ENCODE measurements at regions of chr12 and their contacts with region 1.

Region 1: GRCh38 chr12:101773650-101774162 is 34.4 kb upstream of the SYCP3 start:
- DNase-seq: peak; percentile 52 to 85 (median 60)
- ATAC-seq: peak; percentile 97
- H3K4me3 ChIP-seq: no peak overlapping the region
- H3K4me3 Mint-ChIP-seq: no peak overlapping the region
- H3K27ac ChIP-seq: no peak overlapping the region
- H3K27ac Mint-ChIP-seq: no peak overlapping the region
- H3K4me1 ChIP-seq: no peaks in the 10 kb centered on the region
- H3K4me1 Mint-ChIP-seq: peaks cover 5% of the 10 kb centered on the region
- H3K27me3 ChIP-seq: no peaks in the 10 kb centered on the region
- H3K27me3 Mint-ChIP-seq: no peaks in the 10 kb centered on the region
- CTCF ChIP-seq: peak; percentile 92

Region 2: DNA sequence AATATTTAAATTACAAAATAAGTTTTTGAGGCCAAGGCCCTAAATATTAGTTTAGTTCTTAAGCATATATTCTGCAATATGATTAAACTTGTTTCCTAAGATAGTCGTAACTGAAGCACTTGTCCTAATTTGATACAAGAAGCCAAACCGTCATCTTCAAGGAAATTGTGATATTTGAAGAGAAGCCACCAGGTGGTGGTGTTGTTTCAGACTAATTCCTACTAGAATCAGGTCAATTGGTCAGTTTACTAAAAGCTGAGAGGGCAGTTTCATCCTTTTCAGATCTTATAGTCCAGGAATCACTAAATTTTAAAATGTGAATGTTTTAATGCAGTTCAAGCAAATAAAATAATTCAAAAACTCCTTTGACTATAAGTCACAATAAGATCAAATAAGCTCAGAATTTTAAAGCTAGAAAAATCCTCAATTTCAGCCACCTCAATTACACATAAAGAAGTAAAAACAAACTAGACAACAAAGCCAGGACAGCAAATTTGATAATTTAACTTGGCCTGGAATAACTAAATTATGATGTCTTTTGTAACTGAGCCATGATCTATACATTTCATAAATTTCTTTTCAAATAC is 359.1 kb before region 1 on chr12:
- CTCF ChIA-PET with region 1: no interaction called
- POLR2A ChIA-PET with region 1: no interaction called
- intact Hi-C with region 1: loop called in 1 of 2 experiments (anchors 5 kb)
- DNase-seq: peak in 4 of 14 experiments; percentile 17 to 52 (median 42)
- ATAC-seq: no peak
- H3K4me3 ChIP-seq: no peak overlapping the region
- H3K4me3 Mint-ChIP-seq: no peak overlapping the region
- H3K27ac ChIP-seq: no peak overlapping the region
- H3K27ac Mint-ChIP-seq: no peak overlapping the region
- H3K4me1 ChIP-seq: no peaks in the 10 kb centered on the region
- H3K4me1 Mint-ChIP-seq: no peaks in the 10 kb centered on the region
- H3K27me3 ChIP-seq: no peaks in the 10 kb centered on the region
- H3K27me3 Mint-ChIP-seq: no peaks in the 10 kb centered on the region
- CTCF ChIP-seq: peak; percentile 69

Region 3: DNA sequence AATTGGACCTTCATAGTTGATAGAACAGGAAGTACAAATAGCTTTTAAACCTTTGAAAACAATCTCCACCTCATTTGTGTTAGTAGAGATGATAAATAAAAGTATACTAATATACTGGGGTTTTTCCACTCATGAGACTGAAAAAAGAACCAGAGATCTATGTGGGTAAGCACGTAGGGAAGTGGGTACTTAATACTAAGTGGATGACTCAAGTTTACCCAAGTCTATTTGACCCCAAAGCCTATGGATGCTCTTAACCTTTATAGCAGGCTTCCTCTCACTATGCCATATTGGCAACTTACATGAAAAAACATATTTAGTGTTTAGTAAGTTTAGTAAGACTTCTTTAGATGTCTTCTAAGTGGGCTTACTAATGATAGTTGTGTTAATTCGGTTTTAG is 125.5 kb before region 1 on chr12:
- CTCF ChIA-PET with region 1: no interaction called
- POLR2A ChIA-PET with region 1: no interaction called
- intact Hi-C with region 1: no loop called
- DNase-seq: no peak
- ATAC-seq: no peak
- H3K4me3 ChIP-seq: no peak overlapping the region
- H3K4me3 Mint-ChIP-seq: no peak overlapping the region
- H3K27ac ChIP-seq: no peak overlapping the region
- H3K27ac Mint-ChIP-seq: no peak overlapping the region
- H3K4me1 ChIP-seq: no peaks in the 10 kb centered on the region
- H3K4me1 Mint-ChIP-seq: no peaks in the 10 kb centered on the region
- H3K27me3 ChIP-seq: peaks cover 0 to 2% of the 10 kb centered on the region in 2 experiments
- H3K27me3 Mint-ChIP-seq: peaks cover 48% of the 10 kb centered on the region
- CTCF ChIP-seq: no peak

Region 4: DNA sequence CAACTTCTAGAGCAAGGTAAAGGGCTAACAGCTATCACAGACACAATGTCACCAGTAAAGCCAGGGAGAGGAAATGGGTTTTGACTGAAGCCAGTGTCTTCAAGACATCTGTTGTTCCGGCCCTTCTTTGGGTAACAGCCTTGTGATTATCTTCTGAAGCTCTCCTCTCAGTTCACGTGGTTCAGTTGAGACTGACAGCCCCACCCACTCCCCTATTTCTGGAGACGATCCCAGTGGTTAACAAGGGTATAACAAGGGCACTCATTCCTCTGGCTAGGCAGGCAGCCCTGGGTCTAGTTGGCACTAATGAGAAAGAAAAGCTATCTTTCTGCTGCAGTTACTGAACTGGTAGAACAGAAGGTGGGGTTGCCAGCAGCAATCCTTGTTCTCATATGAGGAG is 50.2 kb after region 1 on chr12:
- CTCF ChIA-PET with region 1: interaction called, 38 read pairs
- POLR2A ChIA-PET with region 1: interaction called, 8 read pairs
- intact Hi-C with region 1: no loop called
- DNase-seq: peak; percentile 40 to 90 (median 56)
- ATAC-seq: peak; percentile 99
- H3K4me3 ChIP-seq: no peak overlapping the region
- H3K4me3 Mint-ChIP-seq: peak overlapping the region; percentile 44
- H3K27ac ChIP-seq: no peak overlapping the region
- H3K27ac Mint-ChIP-seq: peak overlapping the region; percentile 83
- H3K4me1 ChIP-seq: peaks cover 47% of the 10 kb centered on the region
- H3K4me1 Mint-ChIP-seq: peaks cover 69% of the 10 kb centered on the region
- H3K27me3 ChIP-seq: no peaks in the 10 kb centered on the region
- H3K27me3 Mint-ChIP-seq: no peaks in the 10 kb centered on the region
- CTCF ChIP-seq: peak; percentile 42